ENCODE measurements at regions of chr15 and their contacts with region 1.

Region 1: GRCh38 chr15:47618241-47618640 is 99.1 kb upstream of the SEMA6D start:
- DNase-seq: no peak
- ATAC-seq: no peak
- H3K4me3 ChIP-seq: no peak overlapping the region
- H3K27ac ChIP-seq: no peak overlapping the region
- H3K4me1 ChIP-seq: no peaks in the 10 kb centered on the region
- H3K27me3 ChIP-seq: peaks cover 0 to 14% (median 0%) of the 10 kb centered on the region in 9 donors
- CTCF ChIP-seq: no peak
- POLR2A ChIP-seq: no peak

Region 2: GRCh38 chr15:47206358-47206978 is 411.8 kb before region 1 on chr15:
- intact Hi-C with region 1: loop called in 1 of 10 experiments (anchors 10 kb)
- DNase-seq: no peak
- ATAC-seq: no peak
- H3K4me3 ChIP-seq: no peak overlapping the region
- H3K27ac ChIP-seq: no peak overlapping the region
- H3K4me1 ChIP-seq: no peaks in the 10 kb centered on the region
- H3K27me3 ChIP-seq: peaks cover 0 to 2% (median 0%) of the 10 kb centered on the region in 9 donors
- CTCF ChIP-seq: no peak
- POLR2A ChIP-seq: no peak

Region 3: DNA sequence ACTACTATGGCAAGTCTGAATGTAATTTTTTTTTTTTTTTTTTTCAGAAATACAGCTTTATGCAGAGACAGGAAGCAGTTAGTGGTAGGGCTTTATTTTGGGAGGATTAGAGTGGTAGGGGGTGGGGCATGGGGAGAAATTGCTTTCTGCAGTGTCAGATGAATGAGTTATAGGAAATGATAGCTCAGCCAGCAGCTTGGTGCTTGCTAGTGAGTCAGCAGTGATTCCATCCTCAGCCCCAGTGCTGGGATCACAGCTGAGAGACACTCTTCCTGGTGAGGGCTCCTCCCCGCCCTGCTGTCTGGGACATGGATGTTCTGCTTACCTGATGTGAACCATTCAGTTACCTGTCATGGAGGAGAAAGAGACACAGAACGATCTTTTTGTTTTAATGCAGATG is 138.6 kb after region 1 on chr15:
- intact Hi-C with region 1: no loop called
- DNase-seq: peak in 1 of 5 donors; percentile 47
- ATAC-seq: peak; percentile 15 to 85 (median 66)
- H3K4me3 ChIP-seq: no peak overlapping the region
- H3K27ac ChIP-seq: no peak overlapping the region
- H3K4me1 ChIP-seq: peaks cover 0 to 16% (median 0%) of the 10 kb centered on the region in 12 donors
- H3K27me3 ChIP-seq: no peaks in the 10 kb centered on the region
- CTCF ChIP-seq: no peak
- POLR2A ChIP-seq: no peak

Region 4: DNA sequence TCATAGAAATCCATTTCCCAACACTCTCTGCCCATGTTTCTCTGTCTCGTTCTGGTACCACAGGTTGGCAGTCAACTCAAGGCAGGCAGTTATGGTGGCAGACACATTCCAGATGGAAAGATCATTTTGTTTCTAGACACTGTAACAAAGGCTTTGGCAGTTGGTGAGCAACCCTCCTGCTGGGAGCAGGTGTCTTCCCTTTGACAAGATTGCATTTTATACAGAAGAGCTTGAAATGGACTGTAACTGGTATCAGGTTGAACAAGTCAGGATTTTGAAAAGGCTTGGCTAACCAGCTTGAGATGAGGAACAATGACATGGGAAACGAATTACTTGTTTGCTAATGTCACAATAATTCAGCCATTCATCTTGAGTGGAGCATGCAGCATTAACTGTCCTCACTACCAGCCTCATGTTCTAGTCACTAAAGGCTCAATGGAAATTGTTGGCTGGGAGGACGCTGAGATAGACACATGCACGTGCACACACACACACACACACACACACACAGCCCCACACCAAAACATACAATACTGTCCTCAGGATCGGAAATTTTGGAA is 269.1 kb after region 1 on chr15:
- intact Hi-C with region 1: no loop called
- DNase-seq: no peak
- ATAC-seq: no peak
- H3K4me3 ChIP-seq: no peak overlapping the region
- H3K27ac ChIP-seq: no peak overlapping the region
- H3K4me1 ChIP-seq: no peaks in the 10 kb centered on the region
- H3K27me3 ChIP-seq: no peaks in the 10 kb centered on the region
- CTCF ChIP-seq: no peak
- POLR2A ChIP-seq: no peak